ENCODE measurements at regions of chr7 and their contacts with region 1.

Region 1: GRCh38 chr7:30604901-30605300 is 10.2 kb downstream of the GARS1 start:
- DNase-seq: no peak
- ATAC-seq: no peak
- H3K4me3 ChIP-seq: no peak overlapping the region
- H3K27ac ChIP-seq: no peak overlapping the region
- H3K4me1 ChIP-seq: peaks cover 1% of the 10 kb centered on the region; the same call in 1 of the 2 replicates
- H3K27me3 ChIP-seq: no peaks in the 10 kb centered on the region
- CTCF ChIP-seq: no peak
- POLR2A ChIP-seq: no peak
- RAD21 ChIP-seq: no peak

Region 2: GRCh38 chr7:30618080-30618676 is 13.3 kb after region 1 on chr7:
- CTCF ChIA-PET with region 1: interaction called, 4 read pairs
- POLR2A ChIA-PET with region 1: no interaction called
- dilution Hi-C with region 1: no loop called
- in situ Hi-C with region 1: no loop called
- intact Hi-C with region 1: loop called (anchors 1 kb)
- DNase-seq: no peak
- ATAC-seq: no peak
- H3K4me3 ChIP-seq: no peak overlapping the region
- H3K27ac ChIP-seq: no peak overlapping the region
- H3K4me1 ChIP-seq: no peaks in the 10 kb centered on the region; the same call in 1 of the 2 replicates
- H3K27me3 ChIP-seq: no peaks in the 10 kb centered on the region
- CTCF ChIP-seq: no peak
- POLR2A ChIP-seq: no peak
- RAD21 ChIP-seq: no peak

Measured in IMR-90 (cell line).